ENCODE measurements at regions of chr7 and their contacts with region 1.

Region 1: GRCh38 chr7:87219545-87220025 is at the start of gene TMEM243:
- DNase-seq: peak; percentile 45
- ATAC-seq: peak; percentile 69
- H3K4me3 ChIP-seq: peak within 1 kb of the TSS; percentile 95
- H3K27ac ChIP-seq: peak within 1 kb of the TSS; percentile 98
- H3K4me1 ChIP-seq: peaks cover 8% of the 10 kb centered on the region
- H3K27me3 ChIP-seq: no peaks in the 10 kb centered on the region
- CTCF ChIP-seq: peak; percentile 28 to 42 (median 34); a peak in 5 of 6 replicates
- EP300 ChIP-seq: peak in 1 of 2 experiments; percentile 73; a peak in 2 of 4 replicates
- POLR2A ChIP-seq: peak; percentile 90
- RAD21 ChIP-seq: peak; percentile 29; the same call in 1 of the 2 replicates
- polyA plus RNA-seq, gene TMEM243: 47.8 to 70.9 TPM

Region 2: GRCh38 chr7:87173471-87173870 is 46.1 kb before region 1 on chr7:
- CTCF ChIA-PET with region 1: interaction called, 3 read pairs
- POLR2A ChIA-PET with region 1: interaction called, 4 read pairs
- RAD21 ChIA-PET with region 1: interaction called, 10 read pairs
- SMC1A ChIA-PET with region 1: interaction called, 33 read pairs
- in situ Hi-C with region 1: no loop called
- intact Hi-C with region 1: no loop called
- DNase-seq: no peak
- ATAC-seq: no peak
- H3K4me3 ChIP-seq: no peak overlapping the region
- H3K27ac ChIP-seq: no peak overlapping the region
- H3K4me1 ChIP-seq: no peaks in the 10 kb centered on the region
- H3K27me3 ChIP-seq: no peaks in the 10 kb centered on the region
- CTCF ChIP-seq: no peak
- EP300 ChIP-seq: no peak
- POLR2A ChIP-seq: no peak
- RAD21 ChIP-seq: no peak

Region 3: GRCh38 chr7:87345166-87345927 is 125.8 kb after region 1 on chr7 and contains the start of gene CROT:
- CTCF ChIA-PET with region 1: no interaction called
- POLR2A ChIA-PET with region 1: no interaction called
- RAD21 ChIA-PET with region 1: no interaction called
- SMC1A ChIA-PET with region 1: interaction called, 5 read pairs
- in situ Hi-C with region 1: no loop called
- intact Hi-C with region 1: loop called (anchors 5 kb)
- DNase-seq: peak; percentile 67
- ATAC-seq: peak; percentile 97
- H3K4me3 ChIP-seq: peak within 1 kb of the TSS; percentile 80
- H3K27ac ChIP-seq: peak within 1 kb of the TSS; percentile 76
- H3K4me1 ChIP-seq: no peaks in the 10 kb centered on the region
- H3K27me3 ChIP-seq: no peaks in the 10 kb centered on the region
- CTCF ChIP-seq: no peak
- EP300 ChIP-seq: no peak
- POLR2A ChIP-seq: peak; percentile 91
- RAD21 ChIP-seq: no peak
- polyA plus RNA-seq, gene CROT: 5.5 to 6.0 TPM

Region 4: DNA sequence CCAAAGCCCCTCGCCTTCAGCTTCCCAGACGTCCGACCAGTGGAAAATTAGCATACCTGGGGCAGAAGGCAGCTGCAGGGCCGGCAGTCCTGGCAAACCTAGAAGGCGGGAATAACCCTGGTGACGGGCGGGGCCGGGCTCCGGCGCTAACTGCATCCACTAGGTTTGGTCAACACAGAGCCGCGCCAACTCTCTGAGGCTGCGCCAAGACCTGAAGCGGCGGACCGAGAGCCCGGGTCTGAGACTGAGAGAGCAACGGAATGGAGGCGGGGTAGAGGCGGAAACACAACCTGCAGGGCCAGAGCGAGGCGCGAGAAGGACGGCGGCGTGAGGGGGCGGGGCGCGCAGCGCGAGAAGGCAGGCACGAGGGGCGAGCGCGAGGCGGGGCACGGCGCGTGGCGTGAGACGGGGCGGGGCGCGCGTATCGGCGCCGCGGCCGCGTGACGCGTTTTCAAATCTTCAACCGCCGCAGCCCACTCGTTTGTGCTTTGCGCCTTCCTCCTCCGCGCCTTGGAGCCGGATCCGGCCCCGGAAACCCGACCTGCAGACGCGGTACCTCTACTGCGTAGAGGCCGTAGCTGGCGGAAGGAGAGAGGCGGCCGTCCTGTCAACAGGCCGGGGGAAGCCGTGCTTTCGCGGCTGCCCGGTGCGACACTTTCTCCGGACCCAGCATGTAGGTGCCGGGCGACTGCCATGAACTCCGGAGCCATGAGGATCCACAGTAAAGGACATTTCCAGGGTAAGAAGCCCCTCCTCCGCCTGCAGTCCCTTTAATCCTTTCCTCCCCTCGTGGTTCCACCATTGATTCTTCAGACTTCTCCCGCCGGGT is 656.7 kb after region 1 on chr7 and contains the starts of genes DBF4 and SLC25A40:
- CTCF ChIA-PET with region 1: no interaction called
- POLR2A ChIA-PET with region 1: no interaction called
- RAD21 ChIA-PET with region 1: no interaction called
- SMC1A ChIA-PET with region 1: no interaction called
- in situ Hi-C with region 1: no loop called
- intact Hi-C with region 1: loop called (anchors 2 kb)
- DNase-seq: peak; percentile 86
- ATAC-seq: peak; percentile 86
- H3K4me3 ChIP-seq: peak within 1 kb of the TSS; percentile 88
- H3K27ac ChIP-seq: peak within 1 kb of the TSS; percentile 92
- H3K4me1 ChIP-seq: no peaks in the 10 kb centered on the region
- H3K27me3 ChIP-seq: no peaks in the 10 kb centered on the region
- CTCF ChIP-seq: no peak
- EP300 ChIP-seq: peak in 1 of 2 experiments; percentile 34; a peak in 1 of 4 replicates
- POLR2A ChIP-seq: peak; percentile 91
- RAD21 ChIP-seq: no peak
- polyA plus RNA-seq, gene DBF4: 46.1 to 47.0 TPM
- polyA plus RNA-seq, gene SLC25A40: 15.8 to 17.4 TPM

Measured in GM12878 (cell line).